Panc1 (cell line): ENCODE measurements at regions of chr1 and their contacts with region 1.

Region 1: DNA sequence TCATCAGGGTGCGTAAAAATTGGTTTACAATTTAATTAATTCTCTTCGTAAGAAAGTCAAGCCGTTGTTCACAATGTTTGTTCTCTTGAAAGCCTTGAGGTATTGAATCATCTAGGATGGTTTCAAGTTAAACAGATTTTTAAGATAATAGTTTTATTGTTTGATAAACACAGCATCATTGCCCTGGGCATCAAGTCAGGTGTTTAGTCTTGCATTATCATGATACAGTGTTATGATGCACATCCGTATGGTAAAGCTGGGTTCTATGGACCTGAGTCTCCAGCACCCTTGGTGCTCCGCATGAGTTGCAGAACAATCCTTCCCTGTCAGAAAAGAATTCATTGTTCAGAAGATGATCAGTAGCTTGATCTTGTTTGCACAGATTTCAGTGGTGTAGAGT is 359.5 kb downstream of the LMO4 start:
- DNase-seq: no peak
- ATAC-seq: no peak
- H3K4me3 ChIP-seq: no peak overlapping the region
- H3K27ac ChIP-seq: no peak overlapping the region
- H3K4me1 ChIP-seq: no peaks in the 10 kb centered on the region
- H3K27me3 ChIP-seq: no peaks in the 10 kb centered on the region
- CTCF ChIP-seq: no peak

Region 2: DNA sequence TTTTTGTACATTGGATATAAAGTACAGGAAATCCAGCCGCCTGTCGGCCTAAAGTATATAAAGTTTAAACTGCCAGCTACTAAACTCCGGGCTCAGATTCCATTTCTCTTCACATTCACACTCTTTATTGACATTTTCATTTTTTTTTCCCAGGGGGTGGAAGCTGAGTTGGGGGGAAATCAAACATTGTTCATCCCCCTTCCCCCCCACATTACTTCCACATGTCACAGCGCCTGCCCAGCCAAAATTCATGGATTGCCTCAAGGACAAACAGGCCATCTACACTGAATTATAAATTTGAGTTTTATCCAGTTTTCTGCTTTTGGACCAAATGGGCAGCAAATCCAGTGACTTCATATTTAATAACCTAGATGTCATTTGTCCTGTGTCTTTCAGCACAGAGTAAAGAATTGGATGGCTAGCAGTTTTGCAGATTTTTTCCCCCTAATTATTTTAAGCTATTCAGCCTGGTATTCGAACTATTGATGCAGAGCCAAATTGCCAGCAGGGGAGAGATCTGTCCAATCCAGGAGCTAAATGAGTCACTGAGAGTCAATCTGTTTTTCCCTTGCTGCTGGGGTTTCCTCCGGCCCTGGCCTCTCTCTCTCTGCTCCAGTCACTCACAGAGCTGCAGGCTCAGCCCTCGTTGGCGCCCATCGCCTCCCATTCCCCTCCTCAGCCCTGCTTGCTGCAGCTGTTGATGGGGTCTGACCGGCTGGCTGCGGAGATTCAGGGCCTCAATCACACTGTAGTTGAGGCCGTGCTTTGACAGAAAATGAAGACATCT is 261.5 kb before region 1 on chr1:
- CTCF ChIA-PET with region 1: no interaction called
- POLR2A ChIA-PET with region 1: no interaction called
- in situ Hi-C with region 1: no loop called
- intact Hi-C with region 1: no loop called
- DNase-seq: no peak
- ATAC-seq: no peak
- H3K4me3 ChIP-seq: no peak overlapping the region
- H3K27ac ChIP-seq: no peak overlapping the region
- H3K4me1 ChIP-seq: no peaks in the 10 kb centered on the region
- H3K27me3 ChIP-seq: no peaks in the 10 kb centered on the region
- CTCF ChIP-seq: no peak

Region 3: GRCh38 chr1:87636198-87636892 is 51.8 kb before region 1 on chr1:
- CTCF ChIA-PET with region 1: no interaction called
- POLR2A ChIA-PET with region 1: no interaction called
- in situ Hi-C with region 1: no loop called
- intact Hi-C with region 1: no loop called
- DNase-seq: no peak
- ATAC-seq: no peak
- H3K4me3 ChIP-seq: no peak overlapping the region
- H3K27ac ChIP-seq: no peak overlapping the region
- H3K4me1 ChIP-seq: no peaks in the 10 kb centered on the region
- H3K27me3 ChIP-seq: no peaks in the 10 kb centered on the region
- CTCF ChIP-seq: no peak

Region 4: DNA sequence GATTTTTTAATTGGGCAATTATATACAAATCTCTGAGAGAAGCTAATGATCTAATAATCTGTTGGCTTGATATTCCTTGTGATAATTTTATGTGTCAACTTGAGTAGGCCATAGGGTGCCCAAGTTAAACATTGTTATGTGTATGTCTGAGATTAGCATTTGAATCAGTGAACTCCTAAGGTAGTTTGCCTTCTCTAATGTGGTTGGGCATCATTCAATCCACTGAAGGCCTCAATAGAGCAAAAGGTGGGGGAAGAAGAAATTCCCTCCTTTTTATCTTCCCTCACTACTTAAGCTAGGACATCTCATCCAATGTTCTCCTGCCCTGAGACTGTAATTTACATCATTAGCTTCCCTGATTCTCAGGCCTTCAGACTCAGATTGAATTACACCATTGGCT is 35.1 kb after region 1 on chr1:
- CTCF ChIA-PET with region 1: no interaction called
- POLR2A ChIA-PET with region 1: no interaction called
- in situ Hi-C with region 1: no loop called
- intact Hi-C with region 1: loop called (anchors 1 kb)
- DNase-seq: no peak
- ATAC-seq: no peak
- H3K4me3 ChIP-seq: no peak overlapping the region
- H3K27ac ChIP-seq: no peak overlapping the region
- H3K4me1 ChIP-seq: no peaks in the 10 kb centered on the region
- H3K27me3 ChIP-seq: no peaks in the 10 kb centered on the region
- CTCF ChIP-seq: no peak

Region 5: DNA sequence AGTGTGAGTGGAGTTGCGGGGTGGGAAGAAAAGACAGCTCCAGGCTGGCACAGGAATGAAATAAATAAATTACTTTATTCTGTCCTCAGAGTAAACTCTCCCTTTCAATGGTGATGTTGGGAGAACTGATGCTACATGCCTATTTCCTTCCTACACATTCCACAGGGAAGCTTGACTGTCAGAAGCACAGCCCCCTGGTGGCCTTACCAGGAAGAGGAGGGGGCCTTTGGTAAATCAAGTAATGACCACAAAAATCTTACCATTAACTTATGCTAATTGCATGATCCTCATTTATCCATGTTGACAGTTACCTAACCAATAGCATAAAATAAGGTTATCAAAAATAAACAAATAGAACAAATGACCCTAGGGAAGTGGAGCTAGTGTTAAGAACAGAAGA is 390.9 kb after region 1 on chr1:
- CTCF ChIA-PET with region 1: no interaction called
- POLR2A ChIA-PET with region 1: no interaction called
- in situ Hi-C with region 1: no loop called
- intact Hi-C with region 1: no loop called
- DNase-seq: no peak
- ATAC-seq: no peak
- H3K4me3 ChIP-seq: no peak overlapping the region
- H3K27ac ChIP-seq: no peak overlapping the region
- H3K4me1 ChIP-seq: no peaks in the 10 kb centered on the region
- H3K27me3 ChIP-seq: no peaks in the 10 kb centered on the region
- CTCF ChIP-seq: peak; percentile 52